ENCODE measurements at regions of chr1 and their contacts with region 1.

Region 1: DNA sequence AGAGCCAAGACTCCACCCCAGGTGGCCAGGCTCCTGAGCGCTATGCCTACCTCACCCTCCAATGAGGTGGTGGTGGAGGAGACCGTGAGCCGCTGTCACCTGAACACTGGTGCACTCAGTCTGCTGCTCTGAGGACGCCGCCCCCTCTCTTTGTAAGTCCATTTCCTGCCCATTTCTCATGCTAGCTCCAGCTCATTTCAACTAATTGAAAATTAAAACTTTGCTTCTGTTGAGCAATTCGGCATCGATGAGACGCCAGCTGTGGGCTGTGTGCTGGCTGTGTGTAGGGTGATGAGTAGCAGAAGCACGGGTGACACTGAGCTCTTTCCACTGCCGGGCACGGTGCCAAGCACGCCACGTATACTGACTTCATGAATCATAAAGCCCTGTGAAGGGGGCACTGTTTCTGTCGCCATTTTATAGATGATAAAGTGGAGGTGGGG is 11.2 kb downstream of the TNFRSF1B start:
- DNase-seq: peak; percentile 85
- H3K4me3 ChIP-seq: no peak overlapping the region
- H3K27ac ChIP-seq: peak overlapping the region; percentile 95
- H3K4me1 ChIP-seq: peaks cover 43% of the 10 kb centered on the region
- H3K27me3 ChIP-seq: no peaks in the 10 kb centered on the region
- CTCF ChIP-seq: no peak
- POLR2A ChIP-seq: no peak

Region 2: DNA sequence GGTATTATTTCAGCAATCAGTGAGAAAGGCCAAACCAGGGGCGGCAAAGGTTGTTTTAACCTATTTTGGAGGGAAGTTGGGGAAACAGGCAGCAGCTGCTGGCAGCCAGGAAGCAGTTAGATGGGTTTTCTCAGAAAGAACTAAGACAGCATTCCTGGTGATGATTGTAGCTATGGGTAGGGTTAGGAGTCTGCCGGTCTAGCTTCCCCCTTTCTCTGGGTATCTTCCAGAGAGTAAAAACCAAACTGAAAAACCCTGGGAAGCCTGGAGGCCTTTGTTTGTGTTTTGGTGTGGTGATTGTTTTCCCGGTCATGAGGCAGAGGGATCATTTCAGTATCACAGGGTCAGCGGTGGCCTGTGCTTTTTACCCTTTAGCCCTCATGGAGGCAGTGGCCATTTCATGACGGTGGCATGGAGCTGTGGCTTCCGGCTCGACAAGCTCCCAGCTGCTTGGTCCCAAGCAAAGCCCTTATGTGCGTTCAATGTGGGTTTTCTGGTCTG is 30.8 kb before region 1 on chr1:
- CTCF ChIA-PET with region 1: interaction called, 8 read pairs
- POLR2A ChIA-PET with region 1: no interaction called
- dilution Hi-C with region 1: no loop called
- intact Hi-C with region 1: loop called (anchors 1 kb)
- DNase-seq: peak; percentile 93
- H3K4me3 ChIP-seq: no peak overlapping the region
- H3K27ac ChIP-seq: peak overlapping the region; percentile 75
- H3K4me1 ChIP-seq: peaks cover 29% of the 10 kb centered on the region
- H3K27me3 ChIP-seq: no peaks in the 10 kb centered on the region
- CTCF ChIP-seq: no peak
- POLR2A ChIP-seq: no peak

Region 3: DNA sequence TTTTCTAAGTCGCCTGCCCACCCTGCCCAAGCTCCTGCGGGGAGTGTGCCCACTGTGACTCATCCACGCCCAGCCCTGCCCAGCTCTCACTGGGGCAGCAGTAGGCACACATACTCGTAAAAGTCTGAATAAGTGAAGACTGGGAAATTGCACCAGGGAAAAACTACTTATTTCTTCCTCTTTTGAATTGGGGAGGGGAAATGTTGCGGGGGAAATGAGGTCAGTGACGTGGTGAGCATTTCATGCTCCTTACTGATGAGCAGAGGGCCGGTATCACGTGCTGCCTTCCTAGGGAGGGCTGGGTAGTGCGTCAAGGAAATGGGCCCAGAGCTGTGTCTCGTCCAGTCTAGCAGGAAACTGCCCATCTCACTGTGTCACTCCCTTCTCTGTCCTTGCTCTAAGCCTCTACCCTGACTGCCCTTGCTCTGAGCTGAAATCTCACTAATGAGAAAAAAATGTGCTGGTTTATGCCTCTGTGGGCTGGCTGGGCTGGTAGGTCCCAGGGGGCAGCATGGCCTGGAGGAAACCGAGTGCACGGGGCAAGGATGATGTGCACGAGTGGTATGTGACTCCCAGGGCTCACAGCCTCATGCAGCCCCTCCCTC is 24.7 kb before region 1 on chr1:
- CTCF ChIA-PET with region 1: interaction called, 8 read pairs
- POLR2A ChIA-PET with region 1: no interaction called
- dilution Hi-C with region 1: no loop called
- intact Hi-C with region 1: loop called (anchors 2 kb)
- DNase-seq: peak; percentile 49
- H3K4me3 ChIP-seq: no peak overlapping the region
- H3K27ac ChIP-seq: peak overlapping the region; percentile 9
- H3K4me1 ChIP-seq: peaks cover 14% of the 10 kb centered on the region
- H3K27me3 ChIP-seq: no peaks in the 10 kb centered on the region
- CTCF ChIP-seq: no peak
- POLR2A ChIP-seq: no peak

Region 4: GRCh38 chr1:12255918-12256317 is 77.9 kb after region 1 on chr1:
- CTCF ChIA-PET with region 1: no interaction called
- POLR2A ChIA-PET with region 1: no interaction called
- dilution Hi-C with region 1: no loop called
- intact Hi-C with region 1: no loop called
- DNase-seq: no peak
- H3K4me3 ChIP-seq: no peak overlapping the region
- H3K27ac ChIP-seq: no peak overlapping the region
- H3K4me1 ChIP-seq: no peaks in the 10 kb centered on the region
- H3K27me3 ChIP-seq: no peaks in the 10 kb centered on the region
- CTCF ChIP-seq: no peak
- POLR2A ChIP-seq: no peak

Region 5: DNA sequence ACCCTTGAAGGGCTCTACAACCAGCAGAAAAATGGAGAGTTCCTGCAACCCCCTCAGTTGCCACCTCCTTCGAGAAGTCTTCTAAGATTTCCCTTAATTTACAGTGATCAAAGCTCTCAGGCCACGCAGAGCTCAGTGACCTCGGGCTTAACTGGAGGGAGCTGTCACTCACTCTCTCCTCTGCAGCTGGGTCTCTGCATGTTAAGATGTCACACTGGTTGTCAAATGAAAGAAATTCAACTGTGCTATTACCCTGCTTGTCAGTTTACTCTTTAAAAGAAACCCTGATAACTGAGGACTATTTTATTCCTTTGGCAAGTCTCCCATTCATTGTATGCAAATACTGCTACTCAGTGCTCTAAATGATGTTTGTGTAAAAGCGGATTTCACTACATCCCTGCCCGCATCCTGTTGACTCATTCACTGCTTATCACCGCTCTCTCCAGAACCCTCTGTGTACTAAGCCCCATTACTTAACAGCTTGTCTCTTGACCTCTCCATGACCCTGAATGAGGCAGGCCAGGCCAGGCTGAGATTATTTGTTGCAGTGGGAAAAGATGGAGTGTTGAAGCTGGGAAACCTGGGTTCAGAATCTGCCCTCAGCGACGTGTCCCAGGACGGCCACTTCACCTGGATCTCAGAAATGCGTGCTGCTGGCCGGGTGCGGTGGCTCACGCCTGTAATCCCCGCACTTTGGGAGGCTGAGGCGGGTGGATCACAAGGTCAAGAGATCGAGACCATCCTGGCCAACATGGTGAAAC is 426.3 kb after region 1 on chr1:
- CTCF ChIA-PET with region 1: no interaction called
- POLR2A ChIA-PET with region 1: no interaction called
- dilution Hi-C with region 1: no loop called
- intact Hi-C with region 1: loop called (anchors 1 kb)
- DNase-seq: peak; percentile 99
- H3K4me3 ChIP-seq: peak overlapping the region in 1 of 3 experiments; percentile 15
- H3K27ac ChIP-seq: peak overlapping the region; percentile 95
- H3K4me1 ChIP-seq: peaks cover 38% of the 10 kb centered on the region
- H3K27me3 ChIP-seq: no peaks in the 10 kb centered on the region
- CTCF ChIP-seq: no peak
- POLR2A ChIP-seq: peak; percentile 38